Brain microvascular endothelial cell (primary cell): ENCODE measurements at regions of chr17 and their contacts with region 1.

Region 1: DNA sequence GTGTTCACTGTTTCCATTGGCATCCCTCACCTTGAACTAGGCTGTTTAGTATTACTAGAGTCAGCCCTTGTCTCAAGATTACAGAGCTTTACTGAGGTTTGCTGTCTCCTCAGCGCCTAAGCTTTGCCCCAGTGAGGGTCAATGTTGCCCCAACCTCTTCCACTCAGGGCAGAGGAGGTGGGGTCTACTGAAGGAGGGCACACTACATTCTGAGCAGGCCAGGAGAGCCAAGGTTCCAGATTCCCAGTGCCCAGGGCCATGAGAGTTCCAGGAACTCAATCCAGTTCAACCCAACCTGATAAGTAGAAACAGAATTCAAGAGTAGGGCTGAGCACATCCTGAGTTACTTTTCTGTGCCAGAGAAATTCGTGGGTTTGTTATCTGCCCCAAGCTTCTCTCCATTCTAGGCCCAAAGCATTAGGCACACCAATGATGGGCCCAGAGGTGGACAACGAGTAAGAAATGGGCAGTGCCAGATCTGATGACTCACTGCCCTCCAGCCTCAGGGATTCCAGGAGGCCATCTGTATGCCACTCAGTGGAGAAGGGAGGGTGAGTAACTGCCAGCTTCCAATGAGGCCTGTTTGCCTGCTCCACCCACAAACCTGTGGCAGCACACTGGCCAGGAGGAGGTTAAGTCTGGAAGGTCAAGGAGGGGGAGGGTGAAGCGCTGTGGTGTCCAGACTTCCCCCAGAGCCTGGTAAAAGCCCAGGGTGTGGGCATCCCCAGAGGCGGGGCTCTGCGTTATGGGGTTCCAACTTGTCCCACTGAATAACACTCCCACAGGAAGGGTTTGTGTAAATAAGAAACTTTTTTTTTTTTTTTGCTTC is 8.3 kb downstream of the TUBG2 start:
- DNase-seq: no peak
- H3K4me3 ChIP-seq: no peak overlapping the region
- H3K27ac ChIP-seq: no peak overlapping the region
- H3K27me3 ChIP-seq: no peaks in the 10 kb centered on the region
- CTCF ChIP-seq: no peak

Region 2: DNA sequence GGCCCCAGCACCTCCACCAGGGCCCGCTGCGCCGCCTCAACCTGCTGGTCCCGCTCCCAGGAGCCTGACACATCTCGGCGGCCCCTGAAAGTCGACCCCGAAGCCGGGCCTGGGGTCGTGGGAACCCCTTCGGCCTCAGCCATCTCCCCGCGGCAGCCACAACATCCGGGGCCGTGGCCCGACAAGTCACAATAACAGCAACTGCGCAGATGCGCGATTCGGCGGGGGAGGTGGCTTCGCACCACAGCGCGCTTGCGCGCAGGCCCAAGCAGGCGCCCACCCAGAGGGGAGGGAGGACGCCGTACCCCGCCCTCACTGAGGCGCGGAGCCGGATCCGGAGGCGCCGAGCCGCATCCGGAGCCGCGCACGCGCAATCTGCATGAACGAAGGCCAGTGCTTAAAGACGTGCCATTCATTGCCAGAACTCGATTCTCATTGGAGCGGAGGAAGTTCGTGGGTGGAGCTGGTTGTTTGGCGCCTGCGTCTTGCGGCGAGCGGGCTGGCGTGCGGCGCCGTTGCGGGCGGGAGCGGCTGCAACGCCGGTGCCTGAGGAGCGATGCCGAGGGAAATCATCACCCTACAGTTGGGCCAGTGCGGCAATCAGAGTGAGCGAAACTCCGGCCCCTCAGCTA is 58.0 kb before region 1 on chr17 and contains the starts of genes RETREG3 and TUBG1:
- in situ Hi-C with region 1: loop called (anchors 10 kb)
- DNase-seq: peak; percentile 99
- H3K4me3 ChIP-seq: peak within 1 kb of the TSS; percentile 98
- H3K27ac ChIP-seq: peak within 1 kb of the TSS; percentile 83
- H3K27me3 ChIP-seq: no peaks in the 10 kb centered on the region
- CTCF ChIP-seq: peak; percentile 68

Region 3: DNA sequence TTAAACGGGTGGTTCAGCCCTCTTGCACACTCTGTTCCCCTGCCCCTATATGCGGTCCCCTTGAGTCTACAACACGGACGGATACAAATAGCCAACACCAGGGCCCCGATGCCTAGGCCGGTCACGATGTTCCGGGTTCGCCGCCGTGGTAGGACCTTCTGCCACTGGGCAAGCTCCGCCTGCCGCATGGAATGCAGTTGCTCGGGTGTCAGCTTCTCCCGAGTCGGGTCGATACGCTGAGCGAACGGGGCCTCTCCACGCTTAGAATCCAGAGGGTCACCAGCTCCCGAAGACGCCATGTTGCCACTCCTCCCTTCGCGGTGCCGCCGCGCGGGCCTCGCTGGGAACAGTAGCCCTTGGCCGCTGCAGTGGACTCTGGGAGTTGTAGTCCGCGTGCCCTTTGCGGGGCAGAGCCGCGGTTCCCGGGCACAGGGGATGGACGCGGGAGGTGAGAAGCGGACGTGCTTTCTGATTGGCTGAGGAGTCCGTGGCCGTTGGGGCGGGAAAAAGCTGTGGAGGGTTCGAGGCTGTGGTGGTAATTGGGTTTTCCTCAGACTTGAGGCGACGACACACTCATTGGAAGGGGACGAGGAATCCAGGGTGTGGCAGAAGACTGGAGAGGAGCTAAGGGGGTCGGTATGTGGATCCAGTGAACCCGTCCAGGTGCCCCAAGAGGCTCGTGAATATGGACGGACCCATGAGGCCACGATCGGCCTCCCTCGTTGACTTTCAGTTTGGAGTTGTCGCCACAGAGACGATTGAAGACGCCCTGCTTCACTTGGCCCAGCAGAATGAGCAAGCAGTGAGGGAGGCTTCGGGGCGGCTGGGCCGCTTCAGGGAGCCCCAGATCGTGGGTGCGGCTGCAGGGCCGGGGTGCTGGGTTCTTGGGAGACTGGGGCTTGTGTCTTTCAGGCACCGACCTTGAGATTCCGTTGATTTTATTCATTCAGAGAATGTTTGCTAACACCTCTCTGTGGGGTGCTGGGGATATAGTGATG is 131.3 kb after region 1 on chr17 and contains the starts of genes CNTD1 and COA3:
- in situ Hi-C with region 1: no loop called
- DNase-seq: peak; percentile 78
- H3K4me3 ChIP-seq: peak within 1 kb of the TSS; percentile 98
- H3K27ac ChIP-seq: peak within 1 kb of the TSS; percentile 33
- H3K27me3 ChIP-seq: no peaks in the 10 kb centered on the region
- CTCF ChIP-seq: peak; percentile 24